Psoas muscle (tissue), 8 donors: ENCODE measurements at regions of chr5 and their contacts with region 1.

Region 1: DNA sequence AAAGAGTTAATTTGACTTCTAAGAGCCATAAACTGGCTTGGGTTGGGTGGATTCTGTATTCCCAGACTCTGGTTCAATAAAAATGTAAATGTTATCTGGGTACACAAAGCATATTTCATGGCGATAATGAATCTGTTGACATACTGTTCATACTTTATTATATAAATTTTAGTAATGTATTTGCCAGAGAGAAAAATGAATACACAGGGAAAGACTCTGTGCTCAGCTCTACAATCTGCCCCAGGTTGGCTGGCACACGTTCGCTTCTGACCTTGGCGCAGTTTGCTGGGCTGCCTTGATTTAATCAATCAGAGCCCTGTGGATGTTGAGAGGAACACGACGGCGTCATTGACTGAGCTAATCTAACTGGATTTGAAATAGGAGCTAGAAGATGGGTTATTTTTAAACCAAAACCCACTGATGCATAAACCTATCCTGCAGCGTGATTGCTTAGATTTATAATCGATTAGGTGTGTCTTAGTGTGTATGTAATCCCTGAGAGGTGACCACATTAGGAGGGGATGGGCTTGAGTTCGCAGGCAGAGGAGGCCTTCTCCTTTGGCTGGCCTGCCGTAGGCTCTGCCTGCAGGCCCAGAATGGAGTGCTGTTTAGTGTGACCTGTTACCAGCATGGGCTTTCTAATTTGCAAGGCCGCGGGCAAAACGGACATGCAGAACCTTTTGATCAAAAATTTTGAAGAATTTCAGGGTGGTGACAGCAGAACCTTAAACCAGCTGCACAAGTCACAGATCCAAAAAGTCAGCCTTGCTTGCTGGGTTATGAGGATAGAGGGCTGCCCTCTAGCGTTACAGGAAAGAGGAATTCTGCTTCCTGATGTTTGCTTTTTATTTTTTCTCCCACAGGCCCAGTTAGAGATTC is 3.9 kb upstream of the ADCY2 start:
- DNase-seq: no peak
- ATAC-seq: peak in 3 of 4 donors; percentile 29 to 48 (median 29)
- H3K4me3 ChIP-seq: no peak overlapping the region
- H3K27ac ChIP-seq: peak overlapping the region; percentile 84
- H3K4me1 ChIP-seq: no peaks in the 10 kb centered on the region
- H3K27me3 ChIP-seq: no peaks in the 10 kb centered on the region
- CTCF ChIP-seq: peak; percentile 67

Region 2: GRCh38 chr5:6765612-6766525 is 626.2 kb before region 1 on chr5:
- intact Hi-C with region 1: loop called in 1 of 2 experiments (anchors 5 kb)
- DNase-seq: peak; percentile 73 to 83
- ATAC-seq: peak; percentile 59 to 83 (median 72)
- H3K4me3 ChIP-seq: peak overlapping the region; percentile 16
- H3K27ac ChIP-seq: peak overlapping the region; percentile 85
- H3K4me1 ChIP-seq: peaks cover 20% of the 10 kb centered on the region
- H3K27me3 ChIP-seq: no peaks in the 10 kb centered on the region
- CTCF ChIP-seq: peak; percentile 73

Region 3: DNA sequence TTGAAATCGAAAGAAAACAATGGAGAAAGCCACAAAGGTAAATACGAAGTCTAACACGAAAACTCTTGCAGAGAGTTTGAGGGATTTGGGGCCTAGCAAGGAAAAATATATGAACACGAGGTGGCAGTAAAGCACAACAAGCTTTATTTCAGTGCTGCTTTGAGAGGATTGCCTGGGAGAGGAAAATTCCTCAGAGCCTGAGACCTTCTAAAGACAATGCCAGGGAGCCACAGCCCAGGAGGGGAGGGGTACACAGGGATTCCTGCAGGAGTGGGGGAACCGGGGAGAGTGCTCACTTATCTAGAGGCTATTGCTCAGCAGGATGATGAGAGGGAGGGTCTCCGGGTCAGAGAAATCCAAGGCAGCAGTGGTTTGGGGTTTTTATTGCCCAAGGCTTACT is 131.0 kb before region 1 on chr5:
- intact Hi-C with region 1: loop called in 1 of 2 experiments (anchors 2 kb)
- DNase-seq: no peak
- ATAC-seq: peak in 2 of 4 donors; percentile 66 to 67
- H3K4me3 ChIP-seq: no peak overlapping the region
- H3K27ac ChIP-seq: no peak overlapping the region
- H3K4me1 ChIP-seq: no peaks in the 10 kb centered on the region
- H3K27me3 ChIP-seq: no peaks in the 10 kb centered on the region
- CTCF ChIP-seq: peak; percentile 63

Region 4: DNA sequence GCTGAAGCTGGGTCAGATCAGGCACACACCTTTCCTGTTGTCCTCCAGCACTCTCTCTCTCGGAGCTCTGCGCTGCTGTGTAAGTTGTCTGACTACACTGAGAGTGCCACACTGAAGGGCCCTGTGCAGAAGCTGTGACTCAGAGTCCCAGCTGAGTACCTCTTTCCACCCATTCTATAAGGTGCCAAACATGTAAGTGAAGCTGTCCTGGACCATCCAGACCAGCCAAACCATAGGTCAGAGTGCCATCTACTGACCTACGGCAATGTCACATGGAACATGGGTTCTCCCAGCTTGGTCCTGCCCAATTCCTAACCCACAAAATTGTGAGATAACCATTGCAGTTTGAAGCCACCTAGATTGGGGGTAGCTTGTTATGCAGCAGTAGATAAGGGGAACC is 72.1 kb after region 1 on chr5:
- intact Hi-C with region 1: loop called in 1 of 2 experiments (anchors 5 kb)
- DNase-seq: peak in 1 of 2 donors; percentile 57
- ATAC-seq: peak; percentile 89 to 97 (median 96)
- H3K4me3 ChIP-seq: no peak overlapping the region
- H3K27ac ChIP-seq: no peak overlapping the region
- H3K4me1 ChIP-seq: peaks cover 21% of the 10 kb centered on the region
- H3K27me3 ChIP-seq: no peaks in the 10 kb centered on the region
- CTCF ChIP-seq: no peak

Region 5: GRCh38 chr5:7745882-7746610 is 354.0 kb after region 1 on chr5:
- intact Hi-C with region 1: loop called (anchors 2 to 5 kb)
- DNase-seq: peak; percentile 50 to 80
- ATAC-seq: peak; percentile 67 to 88 (median 76)
- H3K4me3 ChIP-seq: no peak overlapping the region
- H3K27ac ChIP-seq: no peak overlapping the region
- H3K4me1 ChIP-seq: no peaks in the 10 kb centered on the region
- H3K27me3 ChIP-seq: no peaks in the 10 kb centered on the region
- CTCF ChIP-seq: peak; percentile 90

Region 6: GRCh38 chr5:7815892-7816534 is 424.0 kb after region 1 on chr5:
- intact Hi-C with region 1: loop called in 1 of 2 experiments (anchors 10 kb)
- DNase-seq: peak; percentile 86 to 88
- ATAC-seq: peak; percentile 95 to 98 (median 96)
- H3K4me3 ChIP-seq: no peak overlapping the region
- H3K27ac ChIP-seq: peak overlapping the region; percentile 23
- H3K4me1 ChIP-seq: no peaks in the 10 kb centered on the region
- H3K27me3 ChIP-seq: no peaks in the 10 kb centered on the region
- CTCF ChIP-seq: peak; percentile 82